Calu3 (cell line): ENCODE measurements at regions of chr14 and their contacts with region 1.

Region 1: GRCh38 chr14:55881577-55882241 is 236.5 kb upstream of the PELI2 start:
- DNase-seq: no peak
- H3K4me3 Mint-ChIP-seq: no peak overlapping the region
- H3K27ac Mint-ChIP-seq: no peak overlapping the region
- H3K4me1 Mint-ChIP-seq: peaks cover 16% of the 10 kb centered on the region
- H3K27me3 Mint-ChIP-seq: peaks cover 13% of the 10 kb centered on the region
- CTCF ChIP-seq: no peak

Region 2: DNA sequence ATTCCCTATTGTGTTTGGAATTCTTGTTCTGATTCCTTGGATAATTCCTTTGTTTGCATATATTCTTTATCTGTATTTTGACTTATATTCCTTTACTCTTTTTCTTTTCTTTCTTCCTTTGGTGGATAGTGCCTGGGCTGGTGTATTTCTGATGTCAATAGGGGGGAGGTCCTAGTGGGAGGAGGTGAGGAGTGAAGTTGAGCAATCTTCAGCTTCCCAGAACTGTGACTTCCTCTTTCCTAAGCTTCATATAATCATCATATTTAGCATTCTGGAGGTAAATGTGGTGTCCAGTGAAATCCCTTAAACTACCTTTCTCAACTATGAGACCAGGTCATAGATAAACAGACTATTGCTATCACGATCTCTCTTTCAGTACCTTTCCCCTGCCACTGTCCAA is 411.7 kb before region 1 on chr14:
- CTCF ChIA-PET with region 1: interaction called, 10 read pairs
- intact Hi-C with region 1: no loop called
- DNase-seq: no peak
- H3K4me3 Mint-ChIP-seq: no peak overlapping the region
- H3K27ac Mint-ChIP-seq: no peak overlapping the region
- H3K4me1 Mint-ChIP-seq: no peaks in the 10 kb centered on the region
- H3K27me3 Mint-ChIP-seq: no peaks in the 10 kb centered on the region
- CTCF ChIP-seq: no peak